Activated CD4-positive, alpha-beta T cell treated with anti-CD3 and anti-CD28 coated beads, Interleukin-2, amount 10 ng/mL, durations not matched to agents 24 days and 14 days (primary cell): ENCODE measurements at regions of chr12 and their contacts with region 1.

Region 1: GRCh38 chr12:65232476-65233077 is 45.9 kb upstream of the MSRB3 start:
- DNase-seq: no peak
- H3K4me3 Mint-ChIP-seq: no peak overlapping the region
- H3K27ac Mint-ChIP-seq: no peak overlapping the region
- H3K4me1 Mint-ChIP-seq: peaks cover 12% of the 10 kb centered on the region
- H3K27me3 Mint-ChIP-seq: no peaks in the 10 kb centered on the region

Region 2: DNA sequence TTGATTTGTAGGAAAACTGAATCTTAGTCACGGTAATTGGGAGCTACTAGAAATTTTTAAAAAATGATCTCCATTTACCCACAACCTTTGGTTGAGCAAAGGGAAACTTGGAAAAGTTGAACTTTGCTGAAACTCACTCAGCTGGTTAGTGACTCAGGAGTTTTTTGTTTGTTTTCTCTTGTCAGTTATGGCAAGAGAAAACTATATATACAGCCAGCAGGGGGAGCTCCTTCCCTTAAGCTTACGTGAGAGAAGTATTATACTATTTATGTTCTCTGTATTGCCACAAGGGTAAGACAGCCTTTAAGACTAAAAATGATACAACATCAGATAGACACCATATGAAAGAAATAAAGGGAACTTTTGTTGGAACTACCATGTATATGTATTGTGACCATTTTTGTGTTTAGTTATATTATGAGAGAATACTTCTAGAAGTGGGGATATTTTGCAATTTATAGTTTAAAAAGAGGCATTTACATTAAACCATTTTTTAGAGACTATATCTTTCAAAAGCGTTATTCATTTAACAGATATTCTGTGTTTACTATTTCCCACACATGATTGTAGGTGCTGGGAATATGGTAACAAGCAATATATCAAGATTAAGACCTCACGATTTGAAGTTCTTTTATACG is 436.2 kb before region 1 on chr12:
- intact Hi-C with region 1: loop called (anchors 2 kb)
- DNase-seq: peak; percentile 89
- H3K4me3 Mint-ChIP-seq: no peak overlapping the region
- H3K27ac Mint-ChIP-seq: no peak overlapping the region
- H3K4me1 Mint-ChIP-seq: no peaks in the 10 kb centered on the region
- H3K27me3 Mint-ChIP-seq: peaks cover 28% of the 10 kb centered on the region

Region 3: GRCh38 chr12:65121049-65121955 is 111.3 kb before region 1 on chr12 and contains the start of gene WIF1:
- intact Hi-C with region 1: loop called (anchors 2 kb)
- DNase-seq: peak; percentile 71
- H3K4me3 Mint-ChIP-seq: peak within 1 kb of the TSS; percentile 53
- H3K27ac Mint-ChIP-seq: no peak within 1 kb of the TSS
- H3K4me1 Mint-ChIP-seq: peaks cover 4% of the 10 kb centered on the region
- H3K27me3 Mint-ChIP-seq: peaks cover 50% of the 10 kb centered on the region
- total RNA-seq, gene WIF1: not detected in 2 replicates

Region 4: DNA sequence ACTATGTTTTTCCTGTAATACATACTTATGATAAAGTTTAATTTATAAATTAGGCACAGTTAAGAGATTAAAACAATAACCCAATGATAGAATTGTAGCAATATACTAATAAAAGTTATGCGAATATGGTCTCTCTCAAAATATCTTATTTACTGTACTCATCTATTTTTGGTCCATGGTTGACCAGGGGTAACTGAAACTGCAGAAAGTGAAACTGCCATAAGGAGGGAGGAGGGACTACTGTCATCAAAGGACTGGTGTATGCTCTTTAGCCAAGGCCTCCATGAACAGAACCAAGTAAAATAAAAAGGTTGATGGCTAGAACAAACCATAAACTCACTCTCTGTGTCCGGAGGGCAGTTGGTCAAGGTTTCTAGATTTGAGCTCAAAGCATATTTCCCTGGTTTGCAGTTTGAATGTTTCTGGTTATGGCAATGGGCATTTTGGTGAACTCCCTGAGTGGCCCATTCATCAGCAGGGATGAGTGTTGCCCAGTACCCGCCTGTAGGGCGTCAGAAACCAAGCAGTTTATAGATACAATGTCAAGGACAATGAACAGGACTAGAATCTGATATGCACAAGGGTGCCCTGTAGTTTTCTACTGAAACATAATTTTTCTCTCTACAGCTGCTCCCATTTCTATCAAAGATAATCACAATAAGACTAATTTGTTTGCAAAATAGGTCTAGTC is 43.4 kb before region 1 on chr12:
- intact Hi-C with region 1: loop called (anchors 5 kb)
- DNase-seq: no peak
- H3K4me3 Mint-ChIP-seq: no peak overlapping the region
- H3K27ac Mint-ChIP-seq: no peak overlapping the region
- H3K4me1 Mint-ChIP-seq: peaks cover 38% of the 10 kb centered on the region
- H3K27me3 Mint-ChIP-seq: no peaks in the 10 kb centered on the region

Region 5: DNA sequence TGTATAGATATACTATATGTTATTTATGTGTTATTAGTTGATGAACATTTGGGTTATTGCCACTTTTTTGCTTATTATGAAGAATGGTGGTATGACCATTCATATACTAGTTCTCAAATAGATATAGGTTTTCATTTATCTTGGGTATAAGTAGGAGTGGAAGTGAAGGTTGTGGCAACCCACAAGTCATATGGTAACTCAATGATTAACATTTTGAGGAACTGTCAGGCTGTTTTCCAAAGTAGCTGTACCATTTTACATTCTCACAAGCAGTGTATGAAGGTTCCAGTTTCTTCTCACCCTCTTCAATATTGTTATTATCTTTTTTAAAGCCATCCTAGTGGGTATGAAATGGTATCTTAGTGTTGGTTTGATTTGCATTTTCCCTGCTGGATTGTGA is 26.9 kb after region 1 on chr12:
- intact Hi-C with region 1: no loop called
- DNase-seq: no peak
- H3K4me3 Mint-ChIP-seq: no peak overlapping the region
- H3K27ac Mint-ChIP-seq: no peak overlapping the region
- H3K4me1 Mint-ChIP-seq: no peaks in the 10 kb centered on the region
- H3K27me3 Mint-ChIP-seq: peaks cover 8% of the 10 kb centered on the region

Region 6: DNA sequence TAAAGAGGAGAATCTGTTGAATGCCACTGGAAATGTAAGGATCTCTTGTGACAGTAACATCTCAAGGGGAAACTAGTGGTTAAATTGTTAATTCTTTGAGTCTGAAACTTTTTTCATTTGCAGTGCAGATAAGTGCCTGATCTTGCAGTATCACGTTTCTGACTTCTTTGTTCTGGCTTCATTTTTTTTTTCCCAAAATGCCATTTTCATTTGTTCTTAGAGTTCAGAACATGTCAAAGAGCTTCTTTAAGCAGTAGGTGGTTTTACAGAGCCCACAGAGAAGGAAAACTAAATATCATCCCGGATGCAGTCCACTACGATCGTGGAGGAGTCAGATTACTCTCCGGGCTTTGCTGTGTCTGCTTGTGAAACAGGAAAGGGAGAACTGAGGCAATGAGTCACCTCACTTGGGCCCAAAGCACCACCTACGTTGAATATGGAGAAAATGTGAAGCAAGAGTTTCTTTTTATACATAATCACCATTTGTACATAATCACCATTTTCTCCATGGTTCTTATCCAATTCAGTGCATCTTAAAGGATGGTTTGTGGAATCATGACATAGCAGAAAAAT is 635.6 kb after region 1 on chr12:
- intact Hi-C with region 1: no loop called
- DNase-seq: no peak
- H3K4me3 Mint-ChIP-seq: no peak overlapping the region
- H3K27ac Mint-ChIP-seq: no peak overlapping the region
- H3K4me1 Mint-ChIP-seq: no peaks in the 10 kb centered on the region
- H3K27me3 Mint-ChIP-seq: peaks cover 10% of the 10 kb centered on the region